Heart right ventricle (tissue), 16 donors: ENCODE measurements at regions of chr3 and their contacts with region 1.

Region 1: DNA sequence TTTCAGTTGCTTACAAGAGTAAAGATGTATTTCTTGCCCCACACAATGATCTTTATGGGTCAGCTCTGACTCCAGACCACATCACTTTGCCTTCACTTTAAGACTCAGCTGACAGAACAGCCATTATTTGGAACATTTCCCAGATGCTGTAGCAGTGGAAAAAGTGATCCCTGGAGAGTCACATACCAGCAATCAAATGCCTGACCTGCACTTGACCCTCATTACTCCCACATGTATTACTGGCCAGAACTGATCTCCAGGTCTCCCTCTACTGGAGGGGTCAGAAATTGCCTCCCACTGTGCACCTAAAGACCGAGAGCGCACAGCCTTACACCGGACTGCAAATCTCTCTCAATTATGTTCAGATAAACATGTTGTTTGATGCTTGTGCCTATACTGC is 88.6 kb upstream of the ZNF385D start:
- DNase-seq: peak in 1 of 2 donors; percentile 81
- ATAC-seq: peak; percentile 93 to 97 (median 95)
- H3K4me3 ChIP-seq: no peak overlapping the region
- H3K27ac ChIP-seq: peak overlapping the region in 8 of 10 donors; percentile 1 to 79 (median 54)
- H3K4me1 ChIP-seq: peaks cover 0 to 16% (median 6%) of the 10 kb centered on the region in 9 donors
- H3K27me3 ChIP-seq: no peaks in the 10 kb centered on the region
- CTCF ChIP-seq: peak; percentile 44 to 75 (median 60)

Region 2: GRCh38 chr3:21691036-21691435 is 148.6 kb before region 1 on chr3:
- intact Hi-C with region 1: no loop called
- DNase-seq: no peak
- ATAC-seq: peak in 3 of 8 donors; percentile 47 to 57 (median 49)
- H3K4me3 ChIP-seq: no peak overlapping the region
- H3K27ac ChIP-seq: peak overlapping the region in 2 of 10 donors; percentile 0 to 41
- H3K4me1 ChIP-seq: peaks cover 0 to 11% (median 0%) of the 10 kb centered on the region in 9 donors
- H3K27me3 ChIP-seq: no peaks in the 10 kb centered on the region
- CTCF ChIP-seq: no peak

Region 3: DNA sequence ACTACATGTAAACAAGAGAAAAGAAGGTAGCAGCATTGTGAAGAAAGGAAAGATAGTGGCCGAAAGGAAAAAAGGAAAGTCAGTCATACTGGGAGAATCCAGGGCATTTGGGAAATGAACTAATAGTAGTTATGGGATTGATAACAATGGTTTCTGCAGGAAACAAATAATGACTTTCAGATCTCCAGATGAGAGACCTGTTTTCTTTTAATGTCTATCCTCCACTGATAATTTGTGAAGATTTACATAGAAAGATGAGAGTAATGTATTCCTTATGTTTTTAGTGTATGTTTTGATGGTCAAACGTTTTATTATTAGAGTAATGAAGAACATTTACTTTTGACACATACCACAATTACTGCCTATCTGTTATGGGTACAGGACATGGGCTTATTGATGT is 73.6 kb before region 1 on chr3:
- intact Hi-C with region 1: loop called in 1 of 10 experiments (anchors 10 kb)
- DNase-seq: no peak
- ATAC-seq: no peak
- H3K4me3 ChIP-seq: no peak overlapping the region
- H3K27ac ChIP-seq: no peak overlapping the region
- H3K4me1 ChIP-seq: no peaks in the 10 kb centered on the region
- H3K27me3 ChIP-seq: no peaks in the 10 kb centered on the region
- CTCF ChIP-seq: no peak

Region 4: DNA sequence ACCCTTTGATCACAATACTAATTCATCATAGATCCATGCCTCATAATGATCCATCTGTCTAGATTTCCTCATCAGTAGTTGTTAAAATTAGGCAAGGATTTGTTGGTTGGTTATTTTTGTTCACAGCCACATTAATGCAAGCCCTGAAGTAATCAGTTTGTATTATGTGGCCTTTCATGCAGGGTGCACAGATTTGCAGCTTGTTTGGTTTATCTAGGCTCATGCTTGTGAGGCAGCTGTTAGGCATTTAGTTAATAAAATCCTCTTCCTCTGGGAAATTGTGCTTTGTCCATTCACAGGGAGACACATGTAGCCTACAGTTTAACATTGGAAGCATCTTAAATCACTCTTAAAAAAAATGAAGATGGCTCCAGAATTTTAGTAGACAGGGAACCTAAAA is 74.2 kb after region 1 on chr3:
- intact Hi-C with region 1: no loop called
- DNase-seq: no peak
- ATAC-seq: peak in 1 of 8 donors; percentile 38
- H3K4me3 ChIP-seq: no peak overlapping the region
- H3K27ac ChIP-seq: no peak overlapping the region
- H3K4me1 ChIP-seq: peaks cover 0 to 54% (median 0%) of the 10 kb centered on the region in 9 donors
- H3K27me3 ChIP-seq: no peaks in the 10 kb centered on the region
- CTCF ChIP-seq: no peak